Dendritic cell treated with granulocyte-macrophage colony-stimulating factor and Interleukin-4, amounts not matched to agents 40 ng/mL and 50 ng/mL, for 4 days (primary cell): ENCODE measurements at regions of chr20 and their contacts with region 1.

Region 1: GRCh38 chr20:10434832-10435812 is at the start of gene SLX4IP:
- H3K4me3 Mint-ChIP-seq: peak within 1 kb of the TSS; percentile 90
- H3K27ac Mint-ChIP-seq: peak within 1 kb of the TSS; percentile 100
- H3K4me1 Mint-ChIP-seq: peaks cover 46% of the 10 kb centered on the region
- H3K27me3 Mint-ChIP-seq: no peaks in the 10 kb centered on the region

Region 2: DNA sequence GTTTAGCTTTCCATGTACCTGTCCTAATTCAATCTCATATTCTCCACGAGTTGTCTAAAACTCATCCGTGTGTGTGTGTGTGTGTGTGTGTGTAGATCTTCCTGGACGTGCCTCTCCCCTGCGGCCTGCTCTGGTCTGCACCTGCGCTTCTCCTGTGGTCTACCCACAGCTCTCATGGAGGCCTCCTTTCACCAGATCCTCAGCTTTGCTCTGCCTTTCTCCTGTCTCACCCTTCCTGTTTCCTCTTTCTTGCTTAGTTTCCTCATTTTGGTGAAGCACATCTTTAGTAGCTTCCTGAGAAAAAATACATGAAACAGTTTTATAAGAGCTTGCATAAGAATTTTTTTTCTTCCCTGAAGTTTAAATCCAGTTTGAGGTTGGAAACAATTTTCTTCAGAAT is 18.1 kb after region 1 on chr20:
- intact Hi-C with region 1: loop called (anchors 1 kb)
- H3K4me3 Mint-ChIP-seq: no peak overlapping the region
- H3K27ac Mint-ChIP-seq: peak overlapping the region; percentile 86
- H3K4me1 Mint-ChIP-seq: peaks cover 21% of the 10 kb centered on the region
- H3K27me3 Mint-ChIP-seq: no peaks in the 10 kb centered on the region

Region 3: GRCh38 chr20:10476319-10476724 is 41.2 kb after region 1 on chr20:
- intact Hi-C with region 1: loop called (anchors 2 kb)
- H3K4me3 Mint-ChIP-seq: no peak overlapping the region
- H3K27ac Mint-ChIP-seq: peak overlapping the region; percentile 86
- H3K4me1 Mint-ChIP-seq: peaks cover 36% of the 10 kb centered on the region
- H3K27me3 Mint-ChIP-seq: no peaks in the 10 kb centered on the region

Region 4: DNA sequence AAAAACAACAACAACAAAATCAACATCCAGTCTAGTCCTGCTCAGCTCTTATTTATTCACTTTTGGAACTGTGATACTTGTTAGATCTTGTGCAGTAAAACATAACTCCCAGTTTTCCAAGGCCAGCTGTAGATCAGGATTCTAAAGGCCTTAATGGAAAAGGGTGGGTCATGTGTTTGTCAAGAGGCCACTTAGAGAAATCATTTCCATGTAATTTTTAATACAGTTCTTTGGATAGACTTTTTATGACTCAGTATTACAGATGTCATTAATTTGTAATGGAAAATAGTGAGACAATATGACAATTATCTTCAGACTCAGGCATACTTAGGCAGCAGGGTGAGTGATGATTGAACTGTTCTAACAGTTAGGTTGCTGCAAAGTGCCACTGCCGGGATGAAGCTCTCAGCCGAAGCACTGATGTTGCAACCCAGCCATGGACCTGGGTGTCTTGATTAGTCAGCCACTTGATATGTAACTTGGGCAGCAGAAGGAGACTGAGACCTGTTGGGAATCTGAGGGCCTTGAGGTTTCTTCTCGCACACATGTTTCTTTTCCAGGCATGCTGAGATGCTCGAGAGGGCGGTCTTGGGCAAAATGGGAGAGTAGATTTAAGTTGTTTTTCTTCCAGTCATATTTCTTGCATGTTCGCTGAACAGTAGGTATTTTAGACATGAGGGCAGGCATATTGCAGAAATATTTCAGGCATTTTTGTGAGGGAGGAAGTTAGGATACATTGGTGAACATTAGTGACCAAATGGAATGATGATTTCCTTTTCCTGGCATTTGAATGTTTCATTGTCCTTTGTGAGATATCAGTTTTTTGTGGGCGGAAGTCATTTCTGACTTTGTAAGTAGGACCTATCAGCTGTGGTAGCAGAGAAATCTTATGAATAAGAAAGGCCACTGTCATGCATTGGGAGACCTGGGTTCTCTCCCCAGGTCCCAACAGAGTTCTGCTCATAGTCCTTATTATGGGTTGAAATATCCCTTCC is 52.3 kb after region 1 on chr20:
- intact Hi-C with region 1: loop called (anchors 1 kb)
- H3K4me3 Mint-ChIP-seq: no peak overlapping the region
- H3K27ac Mint-ChIP-seq: peak overlapping the region; percentile 81
- H3K4me1 Mint-ChIP-seq: peaks cover 69% of the 10 kb centered on the region
- H3K27me3 Mint-ChIP-seq: no peaks in the 10 kb centered on the region